HEK293T (cell line): ENCODE measurements at regions of chr10 and their contacts with region 1.

Region 1: GRCh38 chr10:23158370-23158769 is 33.7 kb upstream of the PTF1A start:
- DNase-seq: peak; percentile 71

Region 2: DNA sequence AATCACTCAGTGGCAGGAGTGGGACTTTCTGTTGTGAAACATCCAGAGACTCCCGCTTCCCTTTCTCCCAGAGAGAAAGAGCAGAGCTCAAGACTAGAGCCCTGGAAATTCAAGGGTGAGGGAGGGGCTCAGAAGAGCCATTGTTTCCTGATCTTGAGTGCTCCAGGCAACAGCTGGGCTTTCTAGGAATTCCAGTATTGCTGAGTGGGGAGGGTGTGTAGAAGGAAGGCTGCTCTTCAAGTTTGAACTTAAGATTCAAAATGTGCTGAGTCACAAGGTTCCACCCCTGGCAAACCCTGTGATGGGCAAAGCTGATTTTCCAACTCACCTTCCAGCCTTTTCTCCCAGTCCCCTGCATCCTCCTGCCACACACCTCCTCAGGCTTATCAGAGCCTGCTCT is 105.3 kb before region 1 on chr10:
- CTCF ChIA-PET with region 1: no interaction called
- POLR2A ChIA-PET with region 1: no interaction called
- DNase-seq: no peak

Region 3: DNA sequence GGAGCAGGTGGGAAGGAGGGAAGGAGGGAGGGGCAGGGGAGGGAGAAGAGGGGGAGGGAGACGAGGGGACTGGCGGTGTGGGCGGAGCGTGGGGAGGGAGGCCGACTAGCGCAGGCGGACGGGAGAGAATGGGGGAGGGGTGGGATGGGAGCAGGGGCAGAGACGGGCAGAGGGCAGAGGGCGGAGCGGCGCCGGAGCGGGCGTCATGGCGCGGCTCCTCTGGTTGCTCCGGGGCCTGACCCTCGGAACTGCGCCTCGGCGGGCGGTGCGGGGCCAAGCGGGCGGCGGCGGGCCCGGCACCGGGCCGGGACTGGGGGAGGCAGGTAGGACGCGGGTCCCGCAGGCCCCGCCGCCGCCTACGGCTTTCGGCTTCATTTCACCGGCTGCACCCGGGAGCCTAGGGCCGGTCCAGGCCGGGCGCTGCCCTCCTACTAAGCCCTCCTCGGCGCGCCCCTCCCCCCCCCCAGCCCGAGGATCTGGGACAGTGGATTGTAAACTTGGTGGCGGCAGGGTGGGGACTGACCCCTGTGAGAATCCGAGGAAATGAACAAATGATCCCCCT is 62.9 kb before region 1 on chr10 and contains the start of gene MSRB2:
- CTCF ChIA-PET with region 1: no interaction called
- POLR2A ChIA-PET with region 1: no interaction called
- DNase-seq: peak; percentile 94

Region 4: DNA sequence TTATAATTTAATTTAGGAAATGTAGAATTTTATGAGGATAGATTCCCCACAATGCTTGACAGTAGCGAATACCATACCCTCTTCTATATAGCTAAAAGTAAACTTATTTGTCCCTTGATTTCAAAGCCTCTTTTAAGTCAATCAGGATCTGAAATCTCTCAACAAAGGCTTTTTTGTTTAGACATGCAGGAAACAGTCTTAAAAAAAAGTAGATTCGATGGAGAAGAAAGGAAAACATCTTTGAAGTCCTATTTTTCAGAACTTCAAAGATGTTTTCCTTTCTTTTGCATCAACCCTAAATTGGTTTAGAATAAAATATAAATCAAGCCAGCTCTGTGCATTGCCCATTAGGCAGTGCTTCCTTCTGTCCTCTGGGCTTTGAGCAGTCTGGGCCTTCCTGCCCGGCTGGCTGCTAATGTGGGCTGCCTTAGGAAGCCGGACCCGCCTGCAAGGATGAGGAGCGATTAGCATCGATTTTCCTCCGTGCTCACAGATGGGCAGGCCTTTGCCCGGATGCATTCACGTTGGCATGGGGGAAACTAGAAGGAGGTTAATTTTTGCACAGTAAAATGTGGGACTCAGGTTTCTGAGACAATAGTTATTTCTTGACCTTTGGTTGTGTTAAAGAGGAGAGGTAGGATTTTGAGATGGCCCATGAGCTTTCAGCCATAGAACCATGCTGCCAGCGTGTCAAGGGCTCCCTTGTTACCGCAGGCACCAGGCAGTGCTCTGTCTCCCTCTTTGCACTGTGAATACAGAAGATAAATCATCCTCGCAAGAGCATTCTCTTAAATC is 47.5 kb before region 1 on chr10:
- CTCF ChIA-PET with region 1: no interaction called
- POLR2A ChIA-PET with region 1: no interaction called
- DNase-seq: no peak

Region 5: DNA sequence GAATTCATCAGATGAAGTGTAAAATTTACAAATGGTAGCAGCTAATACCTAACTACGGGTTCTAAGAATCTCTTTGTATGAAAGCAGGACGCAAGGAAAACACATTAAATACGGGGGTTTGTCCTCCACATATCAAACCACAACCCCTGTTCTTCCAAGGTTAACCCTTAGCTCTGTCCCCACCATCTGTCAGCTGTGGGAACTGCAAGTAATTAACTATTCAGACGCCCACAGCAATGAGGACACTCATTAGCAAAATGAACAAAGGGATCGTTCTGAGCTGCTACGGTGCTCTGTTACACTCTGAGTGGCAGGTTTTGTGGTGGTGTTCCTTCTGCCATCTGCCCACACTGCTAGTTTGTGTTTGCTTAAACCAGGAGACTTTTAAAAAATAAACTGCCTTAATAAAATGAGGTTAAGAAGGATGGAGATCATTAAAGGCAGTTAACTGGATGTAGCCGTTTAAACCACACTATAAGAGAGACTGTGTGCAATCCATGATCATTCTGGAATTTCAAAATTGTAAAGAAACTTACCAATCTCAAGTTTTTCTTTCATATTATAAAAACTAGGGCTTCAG is 134.9 kb after region 1 on chr10:
- CTCF ChIA-PET with region 1: interaction called, 58 read pairs
- POLR2A ChIA-PET with region 1: no interaction called
- DNase-seq: peak; percentile 42

Region 6: GRCh38 chr10:23543696-23544380 is 385.5 kb after region 1 on chr10:
- CTCF ChIA-PET with region 1: interaction called, 12 read pairs
- POLR2A ChIA-PET with region 1: no interaction called
- DNase-seq: no peak